ENCODE measurements at regions of chr6 and their contacts with region 1.

Region 1: DNA sequence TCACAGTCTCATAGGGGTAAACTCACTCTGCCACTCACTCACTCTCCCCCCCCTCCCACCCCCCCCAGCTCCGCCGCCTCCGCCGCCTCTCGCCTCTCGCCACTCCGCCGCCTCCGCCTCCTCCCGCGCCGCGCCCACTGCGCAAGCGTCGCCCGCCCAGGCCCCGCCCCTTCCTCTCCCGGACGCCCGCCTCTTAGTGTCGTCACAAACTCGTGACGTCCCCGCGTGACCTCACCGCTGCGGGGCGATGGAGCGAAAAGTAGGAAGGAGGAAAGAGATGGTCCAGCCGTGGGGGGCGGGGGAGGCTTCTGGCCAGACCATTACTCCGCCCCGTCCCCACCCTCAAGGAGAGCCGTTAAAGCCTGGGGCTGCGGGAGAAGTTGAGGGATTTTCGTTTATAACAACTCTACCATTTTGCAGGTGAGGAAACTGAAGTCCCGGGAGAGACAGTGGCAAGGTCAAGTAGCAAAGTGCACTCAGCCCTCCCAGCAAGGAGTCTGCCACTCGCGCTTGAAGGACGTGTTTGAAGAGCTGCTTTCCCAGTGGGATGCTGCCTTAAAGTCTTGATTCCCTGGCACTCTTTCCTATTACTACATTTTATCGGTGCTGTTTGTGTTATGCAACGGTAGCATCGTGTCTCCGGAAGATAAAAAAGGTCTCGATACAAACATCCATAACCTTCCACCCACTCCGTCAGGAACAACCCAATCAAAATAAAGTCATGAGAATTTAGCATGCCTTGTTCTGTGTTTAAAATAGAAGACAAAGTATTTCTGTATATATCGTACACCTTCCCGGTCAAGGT is at the start of gene ILRUN:
- DNase-seq: peak; percentile 91 to 97 (median 96)
- H3K4me3 ChIP-seq: peak within 1 kb of the TSS; percentile 87 to 96 (median 94)
- H3K4me3 Mint-ChIP-seq: peak within 1 kb of the TSS; percentile 96 to 100
- H3K27ac ChIP-seq: peak within 1 kb of the TSS; percentile 86 to 95
- H3K27ac Mint-ChIP-seq: peak within 1 kb of the TSS; percentile 95 to 99 (median 98)
- H3K4me1 ChIP-seq: peaks cover 29 to 36% of the 10 kb centered on the region in 2 donors
- H3K4me1 Mint-ChIP-seq: peaks cover 40% of the 10 kb centered on the region
- H3K27me3 ChIP-seq: no peaks in the 10 kb centered on the region
- H3K27me3 Mint-ChIP-seq: peaks cover 0 to 2% (median 1%) of the 10 kb centered on the region in 3 donors
- CTCF ChIP-seq: no peak
- polyA plus RNA-seq, gene ILRUN: 6.2 to 19.3 (median 6.5) TPM

Region 2: DNA sequence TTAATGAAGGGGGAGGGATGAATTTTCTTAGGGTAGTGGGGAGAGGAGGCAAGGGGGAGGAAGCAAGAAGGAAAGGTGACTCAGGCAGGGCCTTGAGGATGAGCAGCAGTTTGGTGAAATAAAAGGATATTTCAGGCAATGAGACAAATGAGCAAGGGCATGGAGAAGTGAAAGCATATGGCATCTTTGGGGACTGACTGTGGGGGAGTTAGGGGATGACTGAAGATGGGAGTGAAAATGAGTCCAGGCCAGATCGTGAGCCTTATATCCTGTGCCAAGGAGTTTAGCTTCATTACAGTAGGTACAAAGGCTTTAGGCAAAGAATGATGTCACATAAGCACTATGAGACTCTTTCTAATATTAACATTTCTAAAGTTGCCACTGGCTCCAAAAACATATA is 52.2 kb before region 1 on chr6:
- intact Hi-C with region 1: loop called in 1 of 2 experiments (anchors 10 kb)
- DNase-seq: no peak
- H3K4me3 ChIP-seq: no peak overlapping the region
- H3K4me3 Mint-ChIP-seq: no peak overlapping the region
- H3K27ac ChIP-seq: no peak overlapping the region
- H3K27ac Mint-ChIP-seq: peak overlapping the region in 1 of 7 donors; percentile 48
- H3K4me1 ChIP-seq: no peaks in the 10 kb centered on the region
- H3K4me1 Mint-ChIP-seq: peaks cover 5% of the 10 kb centered on the region
- H3K27me3 ChIP-seq: no peaks in the 10 kb centered on the region
- H3K27me3 Mint-ChIP-seq: no peaks in the 10 kb centered on the region
- CTCF ChIP-seq: no peak

Region 3: DNA sequence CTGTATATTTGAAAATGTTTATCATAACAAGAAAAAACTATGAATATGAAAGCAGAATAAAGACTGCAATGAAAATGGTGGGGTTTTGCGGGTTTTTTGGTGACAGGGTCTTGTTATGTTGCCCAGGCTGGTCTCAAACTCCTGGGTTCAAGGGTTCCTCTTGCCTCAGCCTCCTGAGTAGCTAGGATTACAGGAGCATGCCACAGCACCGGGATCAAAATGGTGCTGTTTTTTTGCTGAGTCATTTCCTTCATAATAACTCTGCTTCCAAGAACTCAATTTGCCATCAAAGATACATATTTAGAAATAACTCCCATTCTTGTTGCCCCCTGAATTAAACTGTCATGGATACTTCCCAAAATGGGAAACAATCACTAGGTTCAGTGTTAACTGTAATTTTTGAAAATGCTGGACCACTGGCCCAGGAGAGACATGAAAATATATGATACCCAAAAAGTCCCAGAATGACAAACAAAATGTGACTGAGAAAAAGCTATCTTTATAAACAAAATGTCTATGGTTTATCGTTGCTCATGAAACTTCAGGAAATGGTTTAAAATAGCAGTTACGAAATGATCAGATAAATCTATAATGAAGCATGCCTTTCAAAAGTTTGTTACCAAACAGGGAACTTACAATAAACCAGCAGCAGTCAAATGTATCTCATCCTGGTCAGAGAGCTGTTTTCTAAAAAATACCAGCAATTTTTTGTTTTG is 32.5 kb before region 1 on chr6:
- intact Hi-C with region 1: loop called (anchors 5 kb)
- DNase-seq: peak in 2 of 3 donors; percentile 33 to 37
- H3K4me3 ChIP-seq: peak overlapping the region in 2 of 3 experiments; percentile 29 to 65
- H3K4me3 Mint-ChIP-seq: peak overlapping the region; percentile 54 to 70
- H3K27ac ChIP-seq: peak overlapping the region; percentile 67 to 86
- H3K27ac Mint-ChIP-seq: peak overlapping the region; percentile 85 to 96 (median 91)
- H3K4me1 ChIP-seq: peaks cover 37 to 47% of the 10 kb centered on the region in 2 donors
- H3K4me1 Mint-ChIP-seq: peaks cover 54% of the 10 kb centered on the region
- H3K27me3 ChIP-seq: no peaks in the 10 kb centered on the region
- H3K27me3 Mint-ChIP-seq: no peaks in the 10 kb centered on the region
- CTCF ChIP-seq: no peak

Region 4: GRCh38 chr6:34819571-34820480 is 122.9 kb after region 1 on chr6:
- intact Hi-C with region 1: no loop called
- DNase-seq: peak; percentile 5 to 20 (median 10)
- H3K4me3 ChIP-seq: peak overlapping the region in 1 of 3 experiments; percentile 6
- H3K4me3 Mint-ChIP-seq: peak overlapping the region in 1 of 2 donors; percentile 32
- H3K27ac ChIP-seq: peak overlapping the region; percentile 16 to 57
- H3K27ac Mint-ChIP-seq: peak overlapping the region; percentile 1 to 85 (median 76)
- H3K4me1 ChIP-seq: peaks cover 31 to 36% of the 10 kb centered on the region in 2 donors
- H3K4me1 Mint-ChIP-seq: peaks cover 43% of the 10 kb centered on the region
- H3K27me3 ChIP-seq: no peaks in the 10 kb centered on the region
- H3K27me3 Mint-ChIP-seq: no peaks in the 10 kb centered on the region
- CTCF ChIP-seq: no peak